ENCODE measurements at regions of chr11 and their contacts with region 1.

Region 1: GRCh38 chr11:96342961-96343711 is at the start of gene MAML2:
- DNase-seq: peak; percentile 84 to 96 (median 89)
- H3K4me3 ChIP-seq: peak within 1 kb of the TSS; percentile 60 to 78
- H3K4me3 Mint-ChIP-seq: peak within 1 kb of the TSS; percentile 91 to 98 (median 94)
- H3K27ac ChIP-seq: peak within 1 kb of the TSS; percentile 75
- H3K27ac Mint-ChIP-seq: peak within 1 kb of the TSS; percentile 86 to 97 (median 96)
- H3K4me1 ChIP-seq: peaks cover 34% of the 10 kb centered on the region
- H3K4me1 Mint-ChIP-seq: peaks cover 23 to 46% (median 30%) of the 10 kb centered on the region in 4 donors
- H3K27me3 ChIP-seq: no peaks in the 10 kb centered on the region
- H3K27me3 Mint-ChIP-seq: no peaks in the 10 kb centered on the region
- total RNA-seq, gene MAML2: 37.5 to 38.3 TPM

Region 2: GRCh38 chr11:95849087-95849825 is 493.9 kb before region 1 on chr11:
- CTCF ChIA-PET with region 1: interaction called, 24 read pairs
- POLR2A ChIA-PET with region 1: no interaction called
- intact Hi-C with region 1: no loop called
- DNase-seq: peak in 1 of 5 donors; percentile 16
- H3K4me3 ChIP-seq: no peak overlapping the region
- H3K4me3 Mint-ChIP-seq: no peak overlapping the region
- H3K27ac ChIP-seq: no peak overlapping the region
- H3K27ac Mint-ChIP-seq: peak overlapping the region in 1 of 7 donors; percentile 67
- H3K4me1 ChIP-seq: no peaks in the 10 kb centered on the region
- H3K4me1 Mint-ChIP-seq: no peaks in the 10 kb centered on the region
- H3K27me3 ChIP-seq: no peaks in the 10 kb centered on the region
- H3K27me3 Mint-ChIP-seq: no peaks in the 10 kb centered on the region

Region 3: DNA sequence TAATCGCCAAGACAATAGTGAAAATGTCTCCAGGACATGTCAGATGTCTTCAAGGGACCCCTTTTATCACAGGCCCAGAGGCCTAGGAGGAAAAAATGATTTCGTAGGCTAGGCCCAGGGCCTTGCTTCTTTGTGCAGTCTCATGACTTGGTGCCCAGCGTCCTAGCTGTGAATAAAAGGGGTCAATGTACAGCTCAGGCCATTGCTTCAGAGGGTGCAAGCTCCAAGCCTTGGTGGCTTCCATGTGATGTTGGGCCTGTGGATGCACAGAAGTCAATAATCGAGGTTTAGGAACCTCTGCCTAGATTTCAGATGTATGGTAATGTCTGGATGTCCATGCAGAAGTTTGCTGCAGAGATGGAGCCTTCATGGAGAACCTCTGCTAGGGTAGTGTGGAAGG is 398.5 kb before region 1 on chr11:
- CTCF ChIA-PET with region 1: no interaction called
- POLR2A ChIA-PET with region 1: no interaction called
- intact Hi-C with region 1: no loop called
- DNase-seq: no peak
- H3K4me3 ChIP-seq: no peak overlapping the region
- H3K4me3 Mint-ChIP-seq: no peak overlapping the region
- H3K27ac ChIP-seq: no peak overlapping the region
- H3K27ac Mint-ChIP-seq: no peak overlapping the region
- H3K4me1 ChIP-seq: no peaks in the 10 kb centered on the region
- H3K4me1 Mint-ChIP-seq: no peaks in the 10 kb centered on the region
- H3K27me3 ChIP-seq: no peaks in the 10 kb centered on the region
- H3K27me3 Mint-ChIP-seq: peaks cover 0 to 2% of the 10 kb centered on the region in 2 donors

Region 4: GRCh38 chr11:96067160-96067559 is 276.0 kb before region 1 on chr11:
- CTCF ChIA-PET with region 1: interaction called, 47 read pairs
- POLR2A ChIA-PET with region 1: interaction called, 5 read pairs
- intact Hi-C with region 1: no loop called
- DNase-seq: no peak
- H3K4me3 ChIP-seq: no peak overlapping the region
- H3K4me3 Mint-ChIP-seq: no peak overlapping the region
- H3K27ac ChIP-seq: no peak overlapping the region
- H3K27ac Mint-ChIP-seq: peak overlapping the region in 2 of 7 donors; percentile 5 to 36
- H3K4me1 ChIP-seq: peaks cover 25% of the 10 kb centered on the region
- H3K4me1 Mint-ChIP-seq: peaks cover 30 to 45% (median 39%) of the 10 kb centered on the region in 4 donors
- H3K27me3 ChIP-seq: no peaks in the 10 kb centered on the region
- H3K27me3 Mint-ChIP-seq: no peaks in the 10 kb centered on the region

Region 5: GRCh38 chr11:96155627-96156378 is 187.3 kb before region 1 on chr11:
- CTCF ChIA-PET with region 1: interaction called, 16 read pairs
- POLR2A ChIA-PET with region 1: interaction called, 4 read pairs
- intact Hi-C with region 1: no loop called
- DNase-seq: no peak
- H3K4me3 ChIP-seq: no peak overlapping the region
- H3K4me3 Mint-ChIP-seq: peak overlapping the region in 6 of 8 donors; percentile 6 to 86 (median 54)
- H3K27ac ChIP-seq: no peak overlapping the region
- H3K27ac Mint-ChIP-seq: peak overlapping the region; percentile 70 to 95 (median 88)
- H3K4me1 ChIP-seq: peaks cover 36% of the 10 kb centered on the region
- H3K4me1 Mint-ChIP-seq: peaks cover 38 to 64% (median 48%) of the 10 kb centered on the region in 4 donors
- H3K27me3 ChIP-seq: no peaks in the 10 kb centered on the region
- H3K27me3 Mint-ChIP-seq: no peaks in the 10 kb centered on the region

Region 6: GRCh38 chr11:96228473-96228891 is 114.7 kb before region 1 on chr11:
- CTCF ChIA-PET with region 1: interaction called, 21 read pairs
- POLR2A ChIA-PET with region 1: interaction called, 27 read pairs
- intact Hi-C with region 1: no loop called
- DNase-seq: no peak
- H3K4me3 ChIP-seq: no peak overlapping the region
- H3K4me3 Mint-ChIP-seq: no peak overlapping the region
- H3K27ac ChIP-seq: no peak overlapping the region
- H3K27ac Mint-ChIP-seq: peak overlapping the region in 6 of 7 donors; percentile 30 to 89 (median 48)
- H3K4me1 ChIP-seq: peaks cover 47% of the 10 kb centered on the region
- H3K4me1 Mint-ChIP-seq: peaks cover 51 to 78% (median 66%) of the 10 kb centered on the region in 4 donors
- H3K27me3 ChIP-seq: no peaks in the 10 kb centered on the region
- H3K27me3 Mint-ChIP-seq: no peaks in the 10 kb centered on the region

Region 7: DNA sequence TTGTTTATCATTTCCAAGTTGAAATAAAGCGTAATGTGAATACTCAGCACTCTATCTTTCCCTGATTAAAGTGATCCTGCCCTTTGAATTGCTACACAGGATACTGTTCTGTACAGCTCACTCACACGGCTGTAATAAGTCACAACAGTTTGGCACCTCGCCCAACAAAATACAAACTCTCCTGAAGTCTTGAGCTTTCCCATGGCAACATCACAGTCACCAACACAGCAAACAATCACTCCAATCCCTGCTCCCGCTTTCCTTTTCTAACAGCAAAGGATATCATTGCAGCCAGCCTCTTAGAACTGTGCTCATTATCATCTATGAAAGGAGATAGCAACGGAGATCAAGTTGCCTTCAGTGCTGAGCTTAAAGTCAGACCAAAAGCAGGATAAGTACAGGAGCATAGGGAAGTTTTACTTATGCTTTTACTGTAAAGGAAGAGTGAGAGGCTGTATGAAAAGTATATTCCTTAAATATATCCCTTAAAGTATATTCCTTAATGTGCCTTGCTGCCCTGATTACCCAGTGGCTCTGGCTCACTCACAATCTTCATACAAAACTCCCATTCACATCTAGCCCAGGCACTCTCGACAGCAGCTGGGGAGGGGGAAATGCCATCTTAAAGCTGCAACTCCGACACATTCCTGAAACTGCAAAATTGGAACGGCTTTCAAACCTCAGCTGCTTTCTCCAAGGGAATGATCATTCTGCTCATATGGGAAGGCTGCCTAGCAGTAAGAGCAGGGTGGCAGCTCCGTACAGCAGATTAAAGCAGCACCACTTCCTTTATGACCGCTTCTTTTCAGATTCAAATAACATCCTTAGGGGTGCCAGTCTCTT is 36.0 kb before region 1 on chr11:
- CTCF ChIA-PET with region 1: interaction called, 58 read pairs
- POLR2A ChIA-PET with region 1: interaction called, 34 read pairs
- intact Hi-C with region 1: loop called (anchors 5 kb)
- DNase-seq: peak in 1 of 5 donors; percentile 20
- H3K4me3 ChIP-seq: no peak overlapping the region
- H3K4me3 Mint-ChIP-seq: peak overlapping the region in 7 of 8 donors; percentile 49 to 80 (median 63)
- H3K27ac ChIP-seq: no peak overlapping the region
- H3K27ac Mint-ChIP-seq: peak overlapping the region; percentile 3 to 86 (median 68)
- H3K4me1 ChIP-seq: peaks cover 38% of the 10 kb centered on the region
- H3K4me1 Mint-ChIP-seq: peaks cover 34 to 71% (median 48%) of the 10 kb centered on the region in 4 donors
- H3K27me3 ChIP-seq: no peaks in the 10 kb centered on the region
- H3K27me3 Mint-ChIP-seq: no peaks in the 10 kb centered on the region

Region 8: GRCh38 chr11:96486894-96487595 is 143.9 kb after region 1 on chr11:
- CTCF ChIA-PET with region 1: no interaction called
- POLR2A ChIA-PET with region 1: no interaction called
- intact Hi-C with region 1: no loop called
- DNase-seq: no peak
- H3K4me3 ChIP-seq: no peak overlapping the region
- H3K4me3 Mint-ChIP-seq: no peak overlapping the region
- H3K27ac ChIP-seq: no peak overlapping the region
- H3K27ac Mint-ChIP-seq: no peak overlapping the region
- H3K4me1 ChIP-seq: no peaks in the 10 kb centered on the region
- H3K4me1 Mint-ChIP-seq: no peaks in the 10 kb centered on the region
- H3K27me3 ChIP-seq: no peaks in the 10 kb centered on the region
- H3K27me3 Mint-ChIP-seq: peaks cover 29 to 30% of the 10 kb centered on the region in 2 donors